Heart right ventricle (tissue), 16 donors: ENCODE measurements at regions of chr1 and their contacts with region 1.

Region 1: GRCh38 chr1:204868340-204868700 is 2.3 kb upstream of the NFASC start:
- DNase-seq: no peak
- ATAC-seq: peak in 5 of 8 donors; percentile 25 to 80 (median 55)
- H3K4me3 ChIP-seq: no peak overlapping the region
- H3K27ac ChIP-seq: peak overlapping the region in 7 of 10 donors; percentile 20 to 63 (median 32)
- H3K4me1 ChIP-seq: peaks cover 0 to 62% (median 17%) of the 10 kb centered on the region in 9 donors
- H3K27me3 ChIP-seq: peaks cover 0 to 11% (median 0%) of the 10 kb centered on the region in 7 donors
- CTCF ChIP-seq: no peak

Region 2: GRCh38 chr1:204828338-204828850 is 39.9 kb before region 1 on chr1:
- intact Hi-C with region 1: loop called in 1 of 10 experiments (anchors 5 kb)
- DNase-seq: peak; percentile 75 to 79
- ATAC-seq: peak; percentile 93 to 97 (median 96)
- H3K4me3 ChIP-seq: peak overlapping the region in 9 of 10 donors; percentile 44 to 69 (median 55)
- H3K27ac ChIP-seq: peak overlapping the region in 7 of 10 donors; percentile 11 to 69 (median 34)
- H3K4me1 ChIP-seq: peaks cover 0 to 22% (median 5%) of the 10 kb centered on the region in 9 donors
- H3K27me3 ChIP-seq: peaks cover 0 to 30% (median 0%) of the 10 kb centered on the region in 7 donors
- CTCF ChIP-seq: peak in 6 of 9 donors; percentile 8 to 54 (median 42)

Region 3: DNA sequence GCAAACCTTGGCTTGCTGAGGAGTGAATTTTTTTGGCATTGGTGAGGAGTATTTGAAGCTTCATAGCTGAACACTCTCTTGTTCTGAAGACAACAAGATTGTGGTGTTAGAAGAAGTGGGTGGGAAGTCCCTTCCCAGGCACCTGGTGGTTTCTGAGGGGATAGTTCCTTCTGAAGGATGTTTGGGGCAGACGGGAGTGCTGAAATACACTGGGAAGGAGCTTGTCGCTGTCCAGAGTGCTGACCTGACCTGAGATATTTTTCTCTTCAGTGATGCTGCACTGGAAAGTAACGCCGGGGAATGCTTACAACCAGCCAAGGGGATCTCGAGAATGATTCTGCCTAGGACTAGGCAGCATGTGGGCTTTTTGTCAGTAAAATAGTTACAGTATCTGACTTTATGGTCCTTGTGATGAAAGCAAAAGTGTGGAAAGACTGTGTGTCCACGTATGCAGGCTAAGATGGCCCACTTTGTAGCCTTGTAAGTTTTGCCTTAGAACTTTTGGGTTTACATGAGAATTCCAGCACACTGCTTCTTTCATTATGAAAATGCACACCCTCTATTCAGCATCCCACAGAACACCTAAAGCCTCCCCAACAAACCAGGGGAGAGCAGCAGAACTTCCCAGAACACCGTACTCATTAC is 30.8 kb before region 1 on chr1:
- intact Hi-C with region 1: loop called in 1 of 10 experiments (anchors 5 kb)
- DNase-seq: peak in 1 of 2 donors; percentile 57
- ATAC-seq: peak in 5 of 8 donors; percentile 13 to 65 (median 57)
- H3K4me3 ChIP-seq: no peak overlapping the region
- H3K27ac ChIP-seq: no peak overlapping the region
- H3K4me1 ChIP-seq: peaks cover 0 to 9% (median 0%) of the 10 kb centered on the region in 9 donors
- H3K27me3 ChIP-seq: peaks cover 0 to 10% (median 0%) of the 10 kb centered on the region in 7 donors
- CTCF ChIP-seq: no peak

Region 4: GRCh38 chr1:204929487-204930154 is 61.3 kb after region 1 on chr1:
- intact Hi-C with region 1: loop called in 1 of 10 experiments (anchors 10 kb)
- DNase-seq: no peak
- ATAC-seq: no peak
- H3K4me3 ChIP-seq: no peak overlapping the region
- H3K27ac ChIP-seq: no peak overlapping the region
- H3K4me1 ChIP-seq: peaks cover 0 to 37% (median 13%) of the 10 kb centered on the region in 9 donors
- H3K27me3 ChIP-seq: peaks cover 0 to 15% (median 0%) of the 10 kb centered on the region in 7 donors
- CTCF ChIP-seq: no peak